Activated CD4-positive, alpha-beta memory T cell treated with anti-CD3 and anti-CD28 coated beads for 36 hours (primary cell): ENCODE measurements at regions of chr1 and their contacts with region 1.

Region 1: DNA sequence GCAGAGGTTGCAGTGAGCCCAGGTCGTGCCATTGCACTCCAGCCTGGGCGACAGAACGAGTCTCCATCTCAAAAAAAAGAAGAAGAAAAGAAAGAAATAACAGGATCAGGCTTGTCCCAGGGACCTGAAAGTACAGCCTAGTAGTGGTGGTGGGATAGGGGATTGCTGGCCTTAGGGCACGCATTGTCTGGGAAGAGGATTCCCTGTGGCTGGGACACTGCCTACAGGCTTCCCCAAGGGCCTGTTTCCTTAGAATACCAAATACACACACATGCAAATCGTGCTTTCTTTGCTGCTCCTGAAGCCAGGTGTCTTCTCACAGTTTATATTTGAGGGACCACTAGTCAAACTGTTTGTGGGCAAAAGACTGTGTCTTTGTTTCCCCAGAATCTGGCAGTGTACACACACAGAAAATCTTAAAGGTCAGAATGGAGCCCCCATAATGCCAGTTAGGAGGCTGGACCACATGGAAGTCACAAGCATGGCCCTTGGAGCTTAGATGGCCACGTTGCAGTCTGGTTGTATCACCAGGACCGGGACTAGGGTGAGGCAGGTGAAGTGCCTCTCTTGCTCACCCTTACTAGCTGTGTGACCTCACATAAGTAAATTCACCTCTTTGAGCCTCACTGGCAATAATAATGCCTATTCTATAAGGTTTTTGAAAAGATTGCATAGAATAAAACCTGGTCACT is 12.7 kb upstream of the ASAP3 start:
- DNase-seq: no peak
- H3K4me3 Mint-ChIP-seq: no peak overlapping the region
- H3K27ac Mint-ChIP-seq: no peak overlapping the region
- H3K4me1 Mint-ChIP-seq: peaks cover 3% of the 10 kb centered on the region
- H3K27me3 Mint-ChIP-seq: no peaks in the 10 kb centered on the region

Region 2: DNA sequence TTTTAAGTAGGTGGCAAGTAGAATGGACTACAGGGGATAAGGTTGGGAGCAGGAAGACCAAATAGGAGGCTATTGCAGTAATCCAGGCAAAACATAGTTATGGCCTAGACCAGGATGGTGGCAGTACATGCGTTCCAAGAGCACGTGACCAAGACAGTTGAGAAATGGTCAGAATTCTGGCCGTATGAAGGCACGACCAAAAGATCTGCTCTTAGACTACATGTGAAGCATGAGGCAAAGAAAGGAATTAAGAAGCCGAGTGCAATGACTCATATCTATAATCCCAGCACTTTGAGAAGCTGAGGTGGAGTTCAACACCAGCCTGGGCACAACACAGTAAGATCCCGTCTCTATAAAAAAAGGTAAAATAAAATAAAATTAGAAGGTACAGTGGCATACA is 399.3 kb before region 1 on chr1:
- CTCF ChIA-PET with region 1: no interaction called
- POLR2A ChIA-PET with region 1: no interaction called
- intact Hi-C with region 1: no loop called
- DNase-seq: no peak
- H3K4me3 Mint-ChIP-seq: no peak overlapping the region
- H3K27ac Mint-ChIP-seq: no peak overlapping the region
- H3K4me1 Mint-ChIP-seq: peaks cover 33% of the 10 kb centered on the region
- H3K27me3 Mint-ChIP-seq: no peaks in the 10 kb centered on the region

Region 3: GRCh38 chr1:23484253-23485001 is 12.2 kb before region 1 on chr1:
- CTCF ChIA-PET with region 1: interaction called, 74 read pairs
- POLR2A ChIA-PET with region 1: no interaction called
- intact Hi-C with region 1: no loop called
- DNase-seq: peak; percentile 94
- H3K4me3 Mint-ChIP-seq: peak overlapping the region; percentile 70
- H3K27ac Mint-ChIP-seq: no peak overlapping the region
- H3K4me1 Mint-ChIP-seq: peaks cover 26% of the 10 kb centered on the region
- H3K27me3 Mint-ChIP-seq: peaks cover 21% of the 10 kb centered on the region

Region 4: GRCh38 chr1:23514111-23514679 is 17.6 kb after region 1 on chr1:
- CTCF ChIA-PET with region 1: interaction called, 45 read pairs
- POLR2A ChIA-PET with region 1: no interaction called
- intact Hi-C with region 1: no loop called
- DNase-seq: no peak
- H3K4me3 Mint-ChIP-seq: no peak overlapping the region
- H3K27ac Mint-ChIP-seq: no peak overlapping the region
- H3K4me1 Mint-ChIP-seq: no peaks in the 10 kb centered on the region
- H3K27me3 Mint-ChIP-seq: no peaks in the 10 kb centered on the region

Region 5: GRCh38 chr1:23530747-23531561 is 34.3 kb after region 1 on chr1 and contains the start of gene E2F2:
- CTCF ChIA-PET with region 1: interaction called, 170 read pairs
- POLR2A ChIA-PET with region 1: interaction called, 5 read pairs
- intact Hi-C with region 1: no loop called
- DNase-seq: peak; percentile 89
- H3K4me3 Mint-ChIP-seq: peak within 1 kb of the TSS; percentile 88
- H3K27ac Mint-ChIP-seq: peak within 1 kb of the TSS; percentile 91
- H3K4me1 Mint-ChIP-seq: peaks cover 75% of the 10 kb centered on the region
- H3K27me3 Mint-ChIP-seq: no peaks in the 10 kb centered on the region
- total RNA-seq, gene E2F2: 22.1 to 26.3 TPM

Region 6: GRCh38 chr1:23657659-23658275 is 161.1 kb after region 1 on chr1:
- CTCF ChIA-PET with region 1: interaction called, 21 read pairs
- POLR2A ChIA-PET with region 1: no interaction called
- intact Hi-C with region 1: loop called (anchors 10 kb)
- DNase-seq: peak; percentile 63
- H3K4me3 Mint-ChIP-seq: no peak overlapping the region
- H3K27ac Mint-ChIP-seq: no peak overlapping the region
- H3K4me1 Mint-ChIP-seq: no peaks in the 10 kb centered on the region
- H3K27me3 Mint-ChIP-seq: no peaks in the 10 kb centered on the region